ENCODE measurements at regions of chr18 and their contacts with region 1.

Region 1: DNA sequence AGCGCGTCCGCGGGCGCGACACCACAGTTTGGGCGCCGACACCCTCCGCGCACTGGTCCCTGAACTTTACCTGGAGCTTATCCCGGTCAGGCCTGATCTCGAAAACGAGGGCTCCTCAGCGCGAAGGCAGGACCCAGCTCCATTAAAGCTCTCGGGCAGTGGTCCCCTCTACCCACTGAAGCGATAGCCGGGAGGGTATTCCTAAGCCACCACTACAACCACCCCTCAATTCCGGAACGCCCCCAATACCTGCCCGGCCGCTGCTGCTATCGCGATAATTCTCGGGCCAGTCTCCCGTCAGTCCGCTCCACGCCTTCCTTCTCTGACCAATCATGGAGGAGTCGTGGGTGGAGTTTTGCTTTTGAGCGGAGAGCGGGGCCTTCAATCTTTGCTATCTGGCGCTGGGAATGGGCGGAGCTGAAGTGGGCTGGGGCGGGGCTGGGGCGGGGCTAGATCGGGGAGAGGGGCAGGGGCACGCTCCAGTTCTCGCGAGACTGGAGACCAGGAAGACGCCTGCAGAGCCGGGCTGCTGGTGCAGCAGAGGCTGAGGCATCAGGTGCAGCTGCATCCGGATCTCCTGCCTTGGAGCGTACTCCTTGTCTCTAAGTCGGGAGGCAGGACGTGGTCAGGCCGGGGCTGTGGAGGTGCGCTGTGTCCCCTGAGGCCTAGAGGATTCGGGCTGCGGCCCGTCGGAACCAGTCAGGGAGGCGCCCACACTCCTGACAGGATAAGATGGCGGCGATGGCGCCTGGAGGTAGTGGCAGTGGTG is at the starts of genes PIGN and RELCH:
- DNase-seq: peak; percentile 95
- CTCF ChIP-seq: no peak

Region 2: DNA sequence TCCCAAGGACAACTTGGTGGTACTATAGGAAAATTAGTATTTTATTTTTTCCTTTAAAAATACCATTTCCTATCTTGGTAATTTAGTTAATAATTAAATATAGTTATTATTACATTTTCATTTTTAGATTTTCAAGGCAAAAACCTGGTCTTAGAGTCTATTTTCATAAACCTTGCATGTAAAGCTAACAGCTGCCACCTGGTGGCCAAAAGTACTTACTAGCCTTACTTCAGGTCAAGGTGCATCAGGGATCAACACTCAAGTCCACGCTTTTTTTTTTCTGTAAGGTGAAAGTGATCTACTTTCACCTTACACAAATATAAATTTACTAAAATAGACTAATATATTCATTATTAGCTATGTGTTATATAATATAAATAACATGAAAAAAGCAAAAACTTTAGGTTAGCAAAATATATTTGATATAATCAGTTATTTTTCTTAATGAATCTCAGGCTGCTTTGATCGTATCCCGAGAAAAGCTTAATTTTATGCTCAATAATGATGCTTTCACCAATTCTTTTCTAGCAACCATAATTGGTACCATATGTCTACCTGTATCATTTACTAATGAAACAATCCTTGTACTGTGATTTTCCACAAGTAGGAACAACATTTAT is 62.6 kb after region 1 on chr18:
- in situ Hi-C with region 1: loop called (anchors 10 kb)
- DNase-seq: peak; percentile 42
- CTCF ChIP-seq: peak; percentile 77